Gastrocnemius medialis (tissue), 4 donors: ENCODE measurements at regions of chr2 and their contacts with region 1.

Region 1: DNA sequence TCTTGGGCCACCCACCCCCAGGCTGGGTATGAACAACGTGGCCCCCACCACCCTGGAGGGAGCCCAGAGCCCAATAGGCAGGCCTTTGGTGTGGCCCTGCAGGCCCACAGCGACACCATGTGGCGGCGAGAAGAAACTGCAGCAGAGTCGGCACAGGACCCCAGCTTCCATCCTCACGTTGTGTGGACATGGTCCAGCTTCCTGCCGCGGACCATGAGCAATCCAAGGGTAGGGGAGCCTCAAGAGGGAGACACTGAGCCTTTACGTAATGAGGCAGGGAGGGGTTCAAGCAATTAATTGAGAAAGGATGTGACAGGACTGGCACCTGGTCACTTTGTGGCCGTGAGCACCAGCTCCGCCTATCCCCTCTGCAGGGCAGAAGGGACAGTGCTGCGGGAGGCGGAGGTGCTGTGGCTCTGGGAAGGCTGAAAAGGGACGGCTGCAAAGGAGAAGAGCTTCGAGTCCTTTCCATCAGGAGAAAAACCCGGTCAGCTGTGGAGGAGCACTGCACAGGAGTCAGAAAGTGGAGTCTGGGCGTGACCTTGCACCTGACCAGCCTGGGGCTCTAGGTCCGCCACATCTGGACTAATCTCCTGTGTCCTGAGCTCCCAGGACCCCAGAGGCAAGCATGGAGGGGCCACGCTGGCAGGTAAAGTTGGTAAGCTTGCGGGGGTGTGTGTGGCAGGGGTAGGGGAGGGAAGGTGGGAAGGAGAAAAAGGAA is 44.8 kb downstream of the TMEM37 start:
- DNase-seq: peak in 1 of 2 donors; percentile 40
- ATAC-seq: peak; percentile 72 to 73
- H3K4me3 ChIP-seq: no peak overlapping the region
- H3K27ac ChIP-seq: no peak overlapping the region
- H3K4me1 ChIP-seq: no peaks in the 10 kb centered on the region
- H3K27me3 ChIP-seq: no peaks in the 10 kb centered on the region
- CTCF ChIP-seq: peak; percentile 70 to 98 (median 90)
- POLR2A ChIP-seq: no peak

Region 2: GRCh38 chr2:119407430-119408220 is 68.8 kb before region 1 on chr2:
- in situ Hi-C with region 1: loop called in 2 of 4 experiments (anchors 5 to 10 kb)
- intact Hi-C with region 1: loop called (anchors 1 kb)
- DNase-seq: peak in 1 of 2 donors; percentile 20
- ATAC-seq: peak; percentile 82 to 89
- H3K4me3 ChIP-seq: no peak overlapping the region
- H3K27ac ChIP-seq: no peak overlapping the region
- H3K4me1 ChIP-seq: peaks cover 0 to 4% of the 10 kb centered on the region in 2 donors
- H3K27me3 ChIP-seq: no peaks in the 10 kb centered on the region
- CTCF ChIP-seq: peak; percentile 72 to 85 (median 82)
- POLR2A ChIP-seq: no peak

Region 3: DNA sequence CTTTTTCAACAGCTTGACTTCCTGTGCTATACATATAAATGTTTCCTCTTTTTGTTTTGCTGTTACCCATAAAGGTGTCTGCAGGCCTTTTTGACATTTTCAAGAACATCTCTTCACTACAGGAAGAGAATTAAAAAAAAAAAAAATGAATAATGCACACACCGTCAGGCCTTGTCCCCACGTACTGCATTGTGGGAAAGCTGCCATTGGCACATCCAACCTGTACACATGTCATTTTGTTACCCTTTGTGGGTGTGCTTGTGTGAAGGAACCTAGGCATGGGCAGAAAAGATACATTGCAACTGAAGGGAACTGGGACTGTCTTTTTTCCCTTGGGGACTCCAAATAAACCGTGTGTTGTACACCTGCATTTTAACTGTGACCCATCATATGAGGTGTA is 61.6 kb before region 1 on chr2:
- in situ Hi-C with region 1: loop called in 1 of 4 experiments (anchors 5 kb)
- intact Hi-C with region 1: no loop called
- DNase-seq: no peak
- ATAC-seq: no peak
- H3K4me3 ChIP-seq: no peak overlapping the region
- H3K27ac ChIP-seq: no peak overlapping the region
- H3K4me1 ChIP-seq: no peaks in the 10 kb centered on the region
- H3K27me3 ChIP-seq: no peaks in the 10 kb centered on the region
- CTCF ChIP-seq: no peak
- POLR2A ChIP-seq: no peak

Region 4: GRCh38 chr2:119536211-119536610 is 59.8 kb after region 1 on chr2:
- in situ Hi-C with region 1: no loop called
- intact Hi-C with region 1: no loop called
- DNase-seq: no peak
- ATAC-seq: no peak
- H3K4me3 ChIP-seq: no peak overlapping the region
- H3K27ac ChIP-seq: no peak overlapping the region
- H3K4me1 ChIP-seq: no peaks in the 10 kb centered on the region
- H3K27me3 ChIP-seq: no peaks in the 10 kb centered on the region
- CTCF ChIP-seq: no peak
- POLR2A ChIP-seq: no peak

Region 5: DNA sequence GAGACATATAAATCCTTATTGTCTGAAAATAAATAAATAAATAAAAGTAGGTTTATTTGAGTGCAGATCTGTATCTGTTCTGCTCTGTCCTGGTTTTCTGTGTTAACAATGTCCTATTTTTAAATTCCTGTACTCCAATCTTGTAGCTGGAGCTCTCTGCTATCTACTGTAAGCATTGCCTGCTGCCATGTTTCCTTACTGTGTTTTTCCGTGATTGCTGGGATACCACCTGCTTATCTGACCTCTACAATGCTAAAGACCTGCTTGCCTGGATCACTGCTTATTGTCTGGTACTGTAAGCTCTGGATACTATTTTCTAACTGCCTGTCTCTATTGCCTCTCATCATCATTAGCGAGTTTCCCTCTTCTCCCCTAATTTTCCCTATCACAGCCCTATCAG is 294.9 kb after region 1 on chr2:
- in situ Hi-C with region 1: no loop called
- intact Hi-C with region 1: no loop called
- DNase-seq: no peak
- ATAC-seq: no peak
- H3K4me3 ChIP-seq: no peak overlapping the region
- H3K27ac ChIP-seq: no peak overlapping the region
- H3K4me1 ChIP-seq: peaks cover 33% of the 10 kb centered on the region in 2 donors
- H3K27me3 ChIP-seq: no peaks in the 10 kb centered on the region
- CTCF ChIP-seq: no peak
- POLR2A ChIP-seq: no peak